ENCODE measurements at regions of chr7 and their contacts with region 1.

Region 1: DNA sequence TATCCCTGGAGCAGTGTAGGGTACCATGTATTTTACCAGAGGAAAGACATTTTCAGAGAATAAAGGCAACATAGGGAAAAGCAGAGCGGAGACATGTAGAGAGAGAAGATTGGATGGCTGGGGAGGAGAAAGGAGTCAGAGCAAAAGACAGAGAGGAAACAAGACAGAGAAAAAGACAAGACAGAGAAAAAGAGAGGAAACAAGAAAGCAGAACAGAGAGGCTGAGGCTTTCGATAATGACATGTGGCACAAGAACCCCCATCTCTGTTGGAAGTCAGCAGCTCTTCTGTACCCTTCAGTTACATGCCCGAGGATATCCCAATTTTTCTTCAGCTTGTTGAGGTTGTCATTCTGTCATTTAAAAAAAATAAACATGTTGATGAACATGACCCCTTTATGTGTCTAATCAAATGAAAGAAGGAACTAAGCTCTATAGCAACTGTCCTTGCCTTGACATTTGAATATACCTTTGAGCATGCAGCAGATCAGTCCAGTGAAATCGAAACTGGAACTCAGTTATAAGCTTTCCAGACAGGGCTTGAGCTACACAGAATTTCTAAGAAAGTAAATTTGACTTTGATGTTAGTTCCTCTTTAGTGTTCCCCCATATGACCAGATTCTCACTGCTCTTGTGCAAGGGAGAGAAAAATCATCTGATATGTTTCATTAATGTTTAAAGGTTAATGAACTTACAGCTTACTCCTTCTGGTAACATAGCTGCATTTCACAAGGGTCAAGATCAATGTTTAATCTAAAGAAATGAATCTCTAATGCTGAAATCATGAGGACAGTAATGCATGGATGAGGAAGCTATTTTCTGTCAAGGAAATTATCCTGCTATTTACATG is 75.1 kb upstream of the SP4 start:
- DNase-seq: no peak
- ATAC-seq: peak; percentile 82
- H3K4me3 Mint-ChIP-seq: peak overlapping the region; percentile 62
- H3K27ac Mint-ChIP-seq: peak overlapping the region; percentile 99
- H3K4me1 Mint-ChIP-seq: peaks cover 71% of the 10 kb centered on the region
- H3K27me3 Mint-ChIP-seq: no peaks in the 10 kb centered on the region

Region 2: DNA sequence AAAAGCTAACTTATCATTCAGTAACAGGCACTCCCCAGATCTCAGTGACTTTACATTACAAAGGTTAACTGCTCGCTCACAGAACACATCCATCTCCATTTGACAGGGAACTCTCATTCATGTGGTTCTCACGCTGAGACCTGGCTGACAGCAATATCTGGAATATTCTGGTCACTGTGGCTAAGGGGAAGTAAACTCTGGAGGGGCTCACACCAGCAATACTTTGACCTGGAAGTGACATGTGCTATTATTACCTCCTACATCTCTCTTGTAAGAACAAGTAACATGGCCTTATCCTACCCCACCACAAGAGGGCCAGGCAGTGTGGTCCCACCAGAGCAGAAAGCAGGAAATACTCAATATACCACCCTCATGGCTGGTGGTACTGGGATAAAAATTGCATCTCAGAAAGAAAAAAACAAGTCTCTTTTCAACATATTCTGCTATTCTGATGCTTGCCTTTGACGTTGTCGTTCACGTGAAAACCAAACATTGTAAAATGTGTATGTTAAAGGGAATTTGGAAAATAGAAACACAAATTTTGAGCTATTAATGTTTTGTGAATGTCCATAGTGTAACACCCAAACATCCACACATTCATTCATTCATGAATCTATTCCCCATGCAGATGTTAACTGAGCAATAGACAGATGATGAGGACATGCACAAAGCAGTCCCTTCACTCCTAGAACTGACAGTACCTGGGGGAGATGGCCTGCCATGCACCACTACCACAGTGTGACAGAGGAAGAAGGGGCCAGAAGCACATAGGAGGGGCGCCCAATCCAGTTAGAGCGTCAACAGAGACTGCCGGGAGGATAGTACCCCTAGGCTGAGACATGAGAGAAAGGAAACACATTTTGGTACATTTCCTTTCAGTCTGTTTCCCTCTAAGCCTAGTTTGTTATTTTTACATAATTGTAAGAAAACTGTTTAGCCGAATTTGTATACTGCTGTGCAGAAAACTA is 90.9 kb before region 1 on chr7:
- CTCF ChIA-PET with region 1: interaction called, 10 read pairs
- DNase-seq: peak; percentile 84
- ATAC-seq: peak; percentile 99
- H3K4me3 Mint-ChIP-seq: no peak overlapping the region
- H3K27ac Mint-ChIP-seq: peak overlapping the region; percentile 74
- H3K4me1 Mint-ChIP-seq: peaks cover 16% of the 10 kb centered on the region
- H3K27me3 Mint-ChIP-seq: no peaks in the 10 kb centered on the region

Region 3: GRCh38 chr7:21293771-21294170 is 59.0 kb before region 1 on chr7:
- CTCF ChIA-PET with region 1: no interaction called
- DNase-seq: no peak
- ATAC-seq: no peak
- H3K4me3 Mint-ChIP-seq: no peak overlapping the region
- H3K27ac Mint-ChIP-seq: no peak overlapping the region
- H3K4me1 Mint-ChIP-seq: no peaks in the 10 kb centered on the region
- H3K27me3 Mint-ChIP-seq: no peaks in the 10 kb centered on the region

Region 4: DNA sequence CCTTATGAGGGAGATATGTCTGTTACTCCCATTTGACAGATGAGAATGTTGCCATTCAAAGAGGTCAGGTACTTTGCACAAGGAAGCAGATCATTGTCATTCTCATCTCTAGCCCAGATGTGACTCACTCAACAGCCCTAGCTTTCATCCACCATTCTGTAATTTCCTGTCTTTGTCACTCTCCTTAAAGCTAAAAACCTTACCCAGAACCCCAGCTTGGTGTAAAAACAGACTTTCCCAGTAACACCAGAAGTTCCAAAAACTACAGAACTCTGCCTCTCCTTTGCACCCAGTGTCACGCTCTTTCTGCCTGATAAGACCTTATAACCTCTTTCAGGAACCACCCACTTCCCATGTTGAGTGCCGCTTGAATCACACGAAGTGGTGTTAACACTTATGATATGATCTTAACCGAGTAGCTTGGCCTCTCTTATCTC is 14.0 kb before region 1 on chr7:
- CTCF ChIA-PET with region 1: interaction called, 18 read pairs
- DNase-seq: peak; percentile 89
- ATAC-seq: peak; percentile 96
- H3K4me3 Mint-ChIP-seq: peak overlapping the region; percentile 8
- H3K27ac Mint-ChIP-seq: peak overlapping the region; percentile 93
- H3K4me1 Mint-ChIP-seq: peaks cover 64% of the 10 kb centered on the region
- H3K27me3 Mint-ChIP-seq: no peaks in the 10 kb centered on the region

Region 5: GRCh38 chr7:21365866-21366624 is 13.3 kb after region 1 on chr7:
- CTCF ChIA-PET with region 1: interaction called, 10 read pairs
- DNase-seq: no peak
- ATAC-seq: peak; percentile 21
- H3K4me3 Mint-ChIP-seq: peak overlapping the region; percentile 0
- H3K27ac Mint-ChIP-seq: peak overlapping the region; percentile 74
- H3K4me1 Mint-ChIP-seq: peaks cover 62% of the 10 kb centered on the region
- H3K27me3 Mint-ChIP-seq: no peaks in the 10 kb centered on the region

Region 6: GRCh38 chr7:21383227-21384220 is 30.8 kb after region 1 on chr7:
- CTCF ChIA-PET with region 1: interaction called, 11 read pairs
- DNase-seq: peak; percentile 46
- ATAC-seq: peak; percentile 84
- H3K4me3 Mint-ChIP-seq: peak overlapping the region; percentile 65
- H3K27ac Mint-ChIP-seq: peak overlapping the region; percentile 95
- H3K4me1 Mint-ChIP-seq: peaks cover 38% of the 10 kb centered on the region
- H3K27me3 Mint-ChIP-seq: no peaks in the 10 kb centered on the region

Measured in activated CD8-positive, alpha-beta memory T cell treated with anti-CD3 and anti-CD28 coated beads, Interleukin-2, amount 10 ng/mL, durations not matched to agents 7 days and 5 days (primary cell).